Activated B cell treated with CpG ODN at 0.5 μM for 24 hours (primary cell): ENCODE measurements at regions of chr15 and their contacts with region 1.

Region 1: DNA sequence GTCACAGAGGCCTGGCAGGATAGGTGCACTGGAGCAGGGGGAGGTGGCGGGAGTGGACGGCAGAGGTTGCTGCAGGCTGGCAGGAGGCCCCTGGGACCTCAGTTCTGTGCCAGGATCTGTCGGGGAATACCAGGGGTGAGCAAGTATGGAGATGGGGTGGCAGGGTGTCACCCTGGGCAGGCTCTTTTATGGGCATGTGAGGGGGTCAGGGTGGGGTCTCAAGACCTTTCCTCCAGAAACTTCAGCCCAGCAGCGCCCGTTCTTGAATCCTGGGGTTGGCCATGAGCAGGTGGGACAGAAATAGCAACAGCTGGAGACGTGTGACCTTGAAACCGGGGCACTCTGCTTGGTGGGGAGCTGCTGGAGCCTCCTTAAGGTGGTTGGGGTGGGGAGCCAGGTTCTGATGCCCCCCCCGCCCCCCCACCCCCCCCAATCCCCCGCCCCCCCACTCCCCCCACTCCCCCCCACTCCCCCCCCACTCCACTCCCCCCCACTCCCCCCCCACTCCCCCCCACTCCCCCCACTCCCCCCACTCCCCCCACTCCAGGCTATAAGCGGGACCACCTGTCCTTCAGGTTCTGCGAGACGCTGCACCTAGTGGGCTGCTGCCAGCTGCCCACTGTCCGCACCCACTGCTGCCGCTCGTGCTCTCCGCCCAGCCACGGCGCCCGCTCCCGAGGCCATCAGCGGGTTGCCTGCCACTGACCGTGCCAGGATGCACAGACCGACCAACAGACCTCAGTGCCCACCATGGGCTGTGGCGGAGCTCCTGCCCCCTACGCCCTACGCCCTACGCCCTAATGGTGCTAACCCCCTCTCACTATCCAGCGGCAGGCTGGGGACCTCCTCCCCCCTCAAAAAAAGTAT is 84.9 kb downstream of the TBC1D2B start:
- DNase-seq: no peak
- ATAC-seq: no peak
- H3K4me3 Mint-ChIP-seq: no peak overlapping the region
- H3K27ac Mint-ChIP-seq: peak overlapping the region; percentile 66
- H3K4me1 Mint-ChIP-seq: peaks cover 48% of the 10 kb centered on the region
- H3K27me3 Mint-ChIP-seq: no peaks in the 10 kb centered on the region
- CTCF ChIP-seq: no peak

Region 2: DNA sequence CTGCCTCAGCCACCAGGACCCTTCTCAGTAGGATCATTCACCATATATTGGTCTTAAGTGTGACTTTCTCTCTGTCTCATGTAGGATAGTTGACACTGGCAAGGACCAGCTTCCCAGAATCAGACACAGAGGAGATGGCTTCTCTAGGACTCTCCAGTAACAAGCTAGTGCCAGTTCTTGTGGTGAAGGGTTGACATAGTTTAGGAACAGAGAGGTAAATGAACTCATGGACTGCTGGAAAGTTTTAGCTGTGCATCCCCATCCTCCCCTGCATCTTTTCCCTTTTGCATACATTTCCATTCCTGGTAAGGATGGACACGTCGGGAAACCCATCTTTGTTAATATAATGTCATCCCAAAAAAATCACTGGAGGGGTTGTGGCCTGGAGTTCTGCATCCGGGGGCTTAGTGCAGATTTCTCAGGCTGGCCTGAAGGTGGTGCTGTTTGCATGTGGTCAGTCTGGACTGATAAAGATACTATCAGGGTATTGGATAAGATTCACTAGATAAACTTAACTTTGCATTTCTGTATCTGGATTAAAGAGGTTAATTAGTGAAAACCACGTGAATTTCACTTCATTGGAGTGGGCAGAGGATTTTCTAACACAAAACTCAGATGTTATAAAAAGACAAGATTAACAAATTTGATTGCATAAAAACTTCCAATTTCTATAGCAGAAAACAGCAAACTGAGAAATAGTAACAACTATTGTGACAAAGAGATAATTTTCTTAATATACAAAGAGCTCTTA is 25.9 kb before region 1 on chr15:
- CTCF ChIA-PET with region 1: interaction called, 3 read pairs
- POLR2A ChIA-PET with region 1: interaction called, 6 read pairs
- intact Hi-C with region 1: loop called (anchors 1 kb)
- DNase-seq: no peak
- ATAC-seq: peak; percentile 77
- H3K4me3 Mint-ChIP-seq: no peak overlapping the region
- H3K27ac Mint-ChIP-seq: no peak overlapping the region
- H3K4me1 Mint-ChIP-seq: no peaks in the 10 kb centered on the region
- H3K27me3 Mint-ChIP-seq: peaks cover 8% of the 10 kb centered on the region
- CTCF ChIP-seq: peak; percentile 83

Region 3: DNA sequence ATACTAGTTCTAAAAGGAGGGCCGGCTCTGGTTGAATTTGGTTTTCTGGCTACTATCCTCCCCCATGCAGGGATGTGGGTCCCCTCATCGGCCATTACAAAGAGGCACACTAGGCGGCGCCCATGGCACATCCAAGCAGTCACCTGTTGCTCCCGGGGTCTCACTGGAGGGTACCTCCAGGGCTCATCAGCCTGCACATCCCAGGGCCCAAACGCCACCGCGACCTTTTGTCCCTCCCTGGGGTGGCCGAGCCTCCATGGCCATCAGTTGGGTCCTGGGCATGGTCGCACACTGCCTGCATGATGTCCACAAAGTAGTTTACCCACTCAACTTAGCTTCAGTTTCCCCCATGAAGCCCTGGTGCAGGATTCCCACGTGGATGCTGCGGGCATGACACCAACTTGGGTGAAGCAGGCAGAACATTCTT is 184.9 kb after region 1 on chr15:
- CTCF ChIA-PET with region 1: no interaction called
- POLR2A ChIA-PET with region 1: no interaction called
- intact Hi-C with region 1: loop called (anchors 10 kb)
- DNase-seq: no peak
- ATAC-seq: peak; percentile 40
- H3K4me3 Mint-ChIP-seq: no peak overlapping the region
- H3K27ac Mint-ChIP-seq: no peak overlapping the region
- H3K4me1 Mint-ChIP-seq: peaks cover 38% of the 10 kb centered on the region
- H3K27me3 Mint-ChIP-seq: no peaks in the 10 kb centered on the region
- CTCF ChIP-seq: no peak